ENCODE measurements at regions of chr4 and their contacts with region 1.

Region 1: DNA sequence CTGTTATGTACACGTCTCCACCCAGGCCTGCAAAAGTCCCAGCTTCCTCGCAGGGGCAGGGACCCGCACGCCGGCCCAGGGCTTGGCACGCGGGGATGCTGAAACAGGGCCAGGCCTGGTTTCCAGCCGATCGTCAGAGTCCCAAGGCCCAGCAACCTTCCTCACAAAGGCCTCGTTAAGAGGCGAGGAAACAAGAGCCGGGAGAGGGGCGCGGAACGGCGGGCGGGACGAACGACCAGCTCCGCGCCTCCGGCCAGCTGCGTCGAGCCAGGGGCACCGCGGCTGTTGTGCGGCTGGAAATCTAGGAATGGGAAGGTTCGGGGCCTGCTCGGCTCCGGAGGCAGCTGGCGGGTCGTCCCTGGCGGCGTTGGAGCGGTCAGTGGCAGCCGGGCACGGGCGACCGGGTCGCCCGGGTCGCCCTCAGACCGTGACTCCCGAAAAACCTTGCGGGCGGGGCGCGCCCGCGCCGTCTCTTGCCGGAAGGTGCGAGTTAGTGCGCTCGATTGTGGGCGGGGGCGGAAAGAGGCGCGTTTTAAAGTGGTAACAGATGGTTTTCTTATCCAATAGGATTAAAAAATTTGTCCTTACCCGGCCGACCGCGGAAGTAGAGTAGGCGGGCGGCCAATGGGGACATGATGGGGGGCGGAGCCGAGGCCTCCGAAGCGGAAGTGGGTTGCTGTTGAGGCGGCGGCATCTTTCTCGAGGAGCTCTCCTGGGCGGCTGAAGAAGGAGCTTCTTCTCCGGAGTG is at the start of gene RNF4:
- DNase-seq: peak; percentile 77 to 97 (median 96)
- ATAC-seq: peak; percentile 93
- H3K4me3 ChIP-seq: peak within 1 kb of the TSS; percentile 70
- H3K4me3 Mint-ChIP-seq: peak within 1 kb of the TSS; percentile 90 to 98 (median 95)
- H3K27ac ChIP-seq: peak within 1 kb of the TSS; percentile 94
- H3K27ac Mint-ChIP-seq: peak within 1 kb of the TSS; percentile 95 to 98 (median 98)
- H3K4me1 ChIP-seq: peaks cover 31 to 37% of the 10 kb centered on the region in 2 donors
- H3K4me1 Mint-ChIP-seq: peaks cover 40 to 66% (median 53%) of the 10 kb centered on the region in 7 donors
- H3K27me3 ChIP-seq: no peaks in the 10 kb centered on the region
- H3K27me3 Mint-ChIP-seq: peaks cover 0 to 6% (median 0%) of the 10 kb centered on the region in 5 donors
- total RNA-seq, gene RNF4: 80.7 to 101 (median 91.8) TPM

Region 2: DNA sequence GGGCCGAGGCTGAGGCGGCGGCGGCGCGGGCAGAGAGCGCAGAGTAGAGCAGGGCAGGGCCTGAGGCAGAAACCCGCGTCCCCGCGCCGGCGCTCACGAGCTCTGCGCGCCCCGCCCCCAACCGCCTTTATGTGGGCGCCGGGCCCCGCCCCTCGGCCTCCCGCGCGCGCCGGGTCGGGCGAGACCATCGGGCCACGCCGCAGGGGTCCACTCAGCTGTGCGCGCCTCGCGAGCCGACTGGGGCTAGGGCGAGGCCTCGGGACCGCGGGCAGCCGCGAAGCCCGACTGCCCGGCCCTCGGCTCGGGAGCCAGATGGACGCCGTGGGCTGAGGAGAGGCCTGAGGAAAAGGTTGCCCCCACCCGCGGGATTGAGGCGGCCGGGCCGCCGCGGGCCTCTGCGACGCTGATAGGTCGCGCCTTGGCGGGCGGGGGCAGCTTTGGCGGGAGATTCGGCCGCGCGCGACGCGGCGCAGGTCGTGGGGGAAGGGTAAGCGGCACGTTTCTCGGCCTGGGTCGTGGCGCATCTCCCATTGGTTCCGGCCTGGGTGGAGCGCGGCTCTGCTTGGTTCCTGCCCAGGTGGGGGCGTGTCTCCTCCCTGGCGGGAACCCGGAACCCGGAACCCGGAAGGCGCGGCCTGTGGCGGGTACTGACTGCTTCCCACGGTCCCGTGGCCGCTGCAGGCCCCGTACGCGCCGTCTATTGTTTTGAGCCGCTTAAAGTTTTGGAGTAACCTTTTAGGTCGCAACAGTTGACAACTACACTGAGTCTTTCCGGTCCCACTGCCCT is 756.2 kb before region 1 on chr4 and contains the start of gene SLBP:
- CTCF ChIA-PET with region 1: no interaction called
- POLR2A ChIA-PET with region 1: no interaction called
- intact Hi-C with region 1: loop called in 1 of 2 experiments (anchors 2 kb)
- DNase-seq: peak; percentile 98 to 99 (median 98)
- ATAC-seq: peak; percentile 92
- H3K4me3 ChIP-seq: peak within 1 kb of the TSS; percentile 100
- H3K4me3 Mint-ChIP-seq: peak within 1 kb of the TSS; percentile 89 to 98 (median 94)
- H3K27ac ChIP-seq: peak within 1 kb of the TSS; percentile 99
- H3K27ac Mint-ChIP-seq: peak within 1 kb of the TSS; percentile 90 to 98 (median 94)
- H3K4me1 ChIP-seq: peaks cover 32 to 34% of the 10 kb centered on the region in 2 donors
- H3K4me1 Mint-ChIP-seq: peaks cover 11 to 67% (median 59%) of the 10 kb centered on the region in 7 donors
- H3K27me3 ChIP-seq: no peaks in the 10 kb centered on the region
- H3K27me3 Mint-ChIP-seq: no peaks in the 10 kb centered on the region
- total RNA-seq, gene SLBP: 29.5 to 103 (median 30.3) TPM

Region 3: GRCh38 chr4:1856042-1856788 is 612.4 kb before region 1 on chr4 and contains the start of gene LETM1:
- CTCF ChIA-PET with region 1: no interaction called
- POLR2A ChIA-PET with region 1: no interaction called
- intact Hi-C with region 1: loop called in 1 of 2 experiments (anchors 5 kb)
- DNase-seq: peak; percentile 79 to 96 (median 88)
- ATAC-seq: peak; percentile 98
- H3K4me3 ChIP-seq: peak within 1 kb of the TSS; percentile 86
- H3K4me3 Mint-ChIP-seq: peak within 1 kb of the TSS; percentile 67 to 88 (median 83)
- H3K27ac ChIP-seq: peak within 1 kb of the TSS; percentile 70
- H3K27ac Mint-ChIP-seq: peak within 1 kb of the TSS in 8 of 9 donors; percentile 17 to 80 (median 48)
- H3K4me1 ChIP-seq: peaks cover 10 to 14% of the 10 kb centered on the region in 2 donors
- H3K4me1 Mint-ChIP-seq: peaks cover 31 to 45% (median 41%) of the 10 kb centered on the region in 7 donors
- H3K27me3 ChIP-seq: no peaks in the 10 kb centered on the region
- H3K27me3 Mint-ChIP-seq: no peaks in the 10 kb centered on the region
- total RNA-seq, gene LETM1: 29.5 to 56.4 (median 36.0) TPM

Region 4: DNA sequence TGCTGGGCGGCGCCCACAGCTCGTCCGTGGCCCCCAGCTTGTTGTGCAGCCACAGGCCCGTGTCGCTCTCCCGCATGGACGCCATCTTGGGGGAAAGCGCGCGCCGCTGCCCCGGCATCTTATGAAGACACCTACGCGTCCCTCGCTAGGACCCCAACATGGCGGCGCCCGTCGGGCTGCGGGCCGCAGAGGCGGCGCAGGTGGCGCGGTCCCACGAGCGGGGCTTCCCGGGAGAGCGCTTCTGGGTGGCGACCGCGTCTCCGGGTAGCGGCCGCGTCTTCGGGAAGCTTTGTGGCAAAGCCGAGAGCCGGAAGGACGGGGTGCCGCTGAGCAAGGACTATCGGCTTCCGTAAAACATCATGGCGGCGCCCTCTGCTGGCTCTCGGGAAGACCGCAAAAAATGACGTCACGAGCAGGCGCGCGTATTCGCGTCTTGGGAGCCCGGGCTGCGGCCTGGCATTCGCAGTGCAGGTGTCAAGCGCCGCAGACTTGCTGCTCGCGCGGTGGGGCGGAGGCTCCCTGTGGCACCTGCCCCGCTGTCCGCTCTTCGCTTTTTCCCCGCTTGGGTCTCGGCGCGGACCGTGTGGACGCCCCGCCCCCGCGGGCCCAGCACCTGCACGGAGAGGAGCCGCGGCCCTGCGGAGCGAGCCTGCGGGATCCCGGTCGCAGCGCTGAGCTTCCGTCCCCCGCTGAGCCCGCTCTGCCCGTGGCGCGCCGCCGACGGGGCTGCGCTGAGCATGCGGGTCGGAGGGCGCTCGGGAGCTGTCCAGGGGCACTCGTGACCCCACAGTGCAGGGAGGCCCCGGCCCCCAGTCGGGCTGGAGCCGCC is 459.5 kb before region 1 on chr4 and contains the start of gene NELFA:
- CTCF ChIA-PET with region 1: no interaction called
- POLR2A ChIA-PET with region 1: no interaction called
- intact Hi-C with region 1: loop called in 1 of 2 experiments (anchors 1 kb)
- DNase-seq: peak; percentile 92 to 98 (median 96)
- ATAC-seq: peak; percentile 93
- H3K4me3 ChIP-seq: peak within 1 kb of the TSS; percentile 96
- H3K4me3 Mint-ChIP-seq: peak within 1 kb of the TSS; percentile 81 to 96 (median 94)
- H3K27ac ChIP-seq: peak within 1 kb of the TSS; percentile 99
- H3K27ac Mint-ChIP-seq: peak within 1 kb of the TSS; percentile 91 to 99 (median 96)
- H3K4me1 ChIP-seq: peaks cover 13 to 24% of the 10 kb centered on the region in 2 donors
- H3K4me1 Mint-ChIP-seq: peaks cover 30 to 38% (median 34%) of the 10 kb centered on the region in 7 donors
- H3K27me3 ChIP-seq: no peaks in the 10 kb centered on the region
- H3K27me3 Mint-ChIP-seq: peaks cover 0 to 20% (median 0%) of the 10 kb centered on the region in 5 donors
- total RNA-seq, gene NELFA: 32.7 to 50.1 (median 43.6) TPM

Region 5: GRCh38 chr4:2364654-2365053 is 104.0 kb before region 1 on chr4:
- CTCF ChIA-PET with region 1: no interaction called
- POLR2A ChIA-PET with region 1: no interaction called
- intact Hi-C with region 1: loop called in 1 of 2 experiments (anchors 1 kb)
- DNase-seq: peak; percentile 49 to 74 (median 61)
- ATAC-seq: peak; percentile 89
- H3K4me3 ChIP-seq: peak overlapping the region; percentile 79
- H3K4me3 Mint-ChIP-seq: peak overlapping the region; percentile 37 to 88 (median 78)
- H3K27ac ChIP-seq: peak overlapping the region; percentile 81
- H3K27ac Mint-ChIP-seq: peak overlapping the region in 8 of 9 donors; percentile 53 to 93 (median 81)
- H3K4me1 ChIP-seq: peaks cover 9 to 12% of the 10 kb centered on the region in 2 donors
- H3K4me1 Mint-ChIP-seq: peaks cover 0 to 31% (median 9%) of the 10 kb centered on the region in 7 donors
- H3K27me3 ChIP-seq: no peaks in the 10 kb centered on the region
- H3K27me3 Mint-ChIP-seq: no peaks in the 10 kb centered on the region

Region 6: GRCh38 chr4:2484993-2485392 is 16.4 kb after region 1 on chr4:
- CTCF ChIA-PET with region 1: interaction called, 3 read pairs
- POLR2A ChIA-PET with region 1: interaction called, 51 read pairs
- intact Hi-C with region 1: loop called (anchors 1 kb)
- DNase-seq: peak; percentile 41 to 74 (median 67)
- ATAC-seq: peak; percentile 92
- H3K4me3 ChIP-seq: peak overlapping the region; percentile 43
- H3K4me3 Mint-ChIP-seq: peak overlapping the region; percentile 77 to 91 (median 86)
- H3K27ac ChIP-seq: peak overlapping the region; percentile 55
- H3K27ac Mint-ChIP-seq: peak overlapping the region; percentile 54 to 91 (median 82)
- H3K4me1 ChIP-seq: peaks cover 64 to 68% of the 10 kb centered on the region in 2 donors
- H3K4me1 Mint-ChIP-seq: peaks cover 65 to 88% (median 80%) of the 10 kb centered on the region in 7 donors
- H3K27me3 ChIP-seq: no peaks in the 10 kb centered on the region
- H3K27me3 Mint-ChIP-seq: no peaks in the 10 kb centered on the region

Region 7: GRCh38 chr4:2934813-2935761 is 466.5 kb after region 1 on chr4:
- CTCF ChIA-PET with region 1: no interaction called
- POLR2A ChIA-PET with region 1: no interaction called
- intact Hi-C with region 1: loop called in 1 of 2 experiments (anchors 1 kb)
- DNase-seq: peak; percentile 90 to 99 (median 95)
- ATAC-seq: peak; percentile 81
- H3K4me3 ChIP-seq: peak overlapping the region; percentile 97
- H3K4me3 Mint-ChIP-seq: peak overlapping the region; percentile 76 to 91 (median 84)
- H3K27ac ChIP-seq: peak overlapping the region; percentile 92
- H3K27ac Mint-ChIP-seq: peak overlapping the region; percentile 67 to 91 (median 87)
- H3K4me1 ChIP-seq: peaks cover 38 to 46% of the 10 kb centered on the region in 2 donors
- H3K4me1 Mint-ChIP-seq: peaks cover 17 to 44% (median 37%) of the 10 kb centered on the region in 7 donors
- H3K27me3 ChIP-seq: no peaks in the 10 kb centered on the region
- H3K27me3 Mint-ChIP-seq: no peaks in the 10 kb centered on the region